ENCODE measurements at regions of chr1 and their contacts with region 1.

Region 1: DNA sequence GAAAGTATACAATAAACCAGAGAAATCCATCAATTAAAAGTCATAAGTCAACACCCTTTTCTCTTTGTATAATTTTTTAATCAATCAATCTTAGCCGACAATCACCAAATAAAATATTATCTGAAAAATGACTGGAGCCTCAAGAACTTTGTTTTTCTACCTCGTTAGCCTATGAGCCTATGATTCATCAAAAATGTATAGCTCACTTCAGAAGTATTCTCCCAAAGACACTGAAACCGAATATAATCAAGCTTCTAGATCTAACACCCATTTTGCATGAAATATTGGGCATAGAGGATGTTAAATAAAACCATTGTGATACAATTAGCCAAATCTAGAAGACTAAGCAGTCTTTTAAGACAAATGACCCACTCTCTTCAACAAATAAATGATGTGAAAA is 17.8 kb upstream of the RSBN1 start:
- DNase-seq: peak; percentile 14
- H3K4me3 ChIP-seq: no peak overlapping the region
- H3K27ac ChIP-seq: no peak overlapping the region
- H3K4me1 ChIP-seq: peaks cover 6% of the 10 kb centered on the region
- H3K27me3 ChIP-seq: no peaks in the 10 kb centered on the region
- CTCF ChIP-seq: no peak

Region 2: GRCh38 chr1:114282751-114283403 is 452.8 kb after region 1 on chr1:
- CTCF ChIA-PET with region 1: no interaction called
- dilution Hi-C with region 1: no loop called
- in situ Hi-C with region 1: loop called in 1 of 2 experiments (anchors 25 kb)
- intact Hi-C with region 1: loop called (anchors 5 kb)
- DNase-seq: peak; percentile 64
- H3K4me3 ChIP-seq: no peak overlapping the region
- H3K27ac ChIP-seq: no peak overlapping the region
- H3K4me1 ChIP-seq: no peaks in the 10 kb centered on the region
- H3K27me3 ChIP-seq: no peaks in the 10 kb centered on the region
- CTCF ChIP-seq: peak; percentile 85 to 93

Measured in mammary epithelial cell (primary cell).